Psoas muscle (tissue), 8 donors: ENCODE measurements at regions of chr7 and their contacts with region 1.

Region 1: GRCh38 chr7:105112440-105113418 is 98.7 kb downstream of the KMT2E start:
- DNase-seq: no peak
- ATAC-seq: peak; percentile 27 to 54 (median 40)
- H3K4me3 ChIP-seq: no peak overlapping the region
- H3K27ac ChIP-seq: no peak overlapping the region
- H3K4me1 ChIP-seq: no peaks in the 10 kb centered on the region
- H3K27me3 ChIP-seq: no peaks in the 10 kb centered on the region
- CTCF ChIP-seq: no peak

Region 2: DNA sequence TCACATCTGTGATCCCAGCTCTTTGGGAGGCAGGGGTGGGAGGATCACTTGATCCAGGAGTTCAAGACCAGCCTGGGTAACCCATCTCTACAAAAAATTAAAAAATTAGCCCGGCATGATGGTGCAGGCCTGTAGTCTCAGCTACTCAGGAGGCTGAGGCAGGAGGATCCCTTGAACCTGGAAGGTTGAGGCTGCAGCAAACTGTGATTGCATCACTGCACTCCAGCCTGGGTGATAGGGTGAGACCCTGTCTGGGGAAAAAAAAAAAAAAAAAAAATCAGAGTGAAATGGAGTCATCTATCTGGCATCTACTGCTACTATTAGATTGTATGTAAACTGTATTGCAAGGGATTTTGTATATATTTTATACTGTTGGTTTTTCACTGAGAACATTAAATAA is 39.6 kb before region 1 on chr7:
- intact Hi-C with region 1: loop called in 1 of 2 experiments (anchors 5 kb)
- DNase-seq: no peak
- ATAC-seq: no peak
- H3K4me3 ChIP-seq: no peak overlapping the region
- H3K27ac ChIP-seq: no peak overlapping the region
- H3K4me1 ChIP-seq: no peaks in the 10 kb centered on the region
- H3K27me3 ChIP-seq: no peaks in the 10 kb centered on the region
- CTCF ChIP-seq: no peak

Region 3: GRCh38 chr7:105156731-105157130 is 44.0 kb after region 1 on chr7:
- intact Hi-C with region 1: no loop called
- DNase-seq: no peak
- ATAC-seq: no peak
- H3K4me3 ChIP-seq: no peak overlapping the region
- H3K27ac ChIP-seq: no peak overlapping the region
- H3K4me1 ChIP-seq: peaks cover 7% of the 10 kb centered on the region
- H3K27me3 ChIP-seq: no peaks in the 10 kb centered on the region
- CTCF ChIP-seq: no peak